HEK293 (cell line): ENCODE measurements at regions of chr10 and their contacts with region 1.

Region 1: DNA sequence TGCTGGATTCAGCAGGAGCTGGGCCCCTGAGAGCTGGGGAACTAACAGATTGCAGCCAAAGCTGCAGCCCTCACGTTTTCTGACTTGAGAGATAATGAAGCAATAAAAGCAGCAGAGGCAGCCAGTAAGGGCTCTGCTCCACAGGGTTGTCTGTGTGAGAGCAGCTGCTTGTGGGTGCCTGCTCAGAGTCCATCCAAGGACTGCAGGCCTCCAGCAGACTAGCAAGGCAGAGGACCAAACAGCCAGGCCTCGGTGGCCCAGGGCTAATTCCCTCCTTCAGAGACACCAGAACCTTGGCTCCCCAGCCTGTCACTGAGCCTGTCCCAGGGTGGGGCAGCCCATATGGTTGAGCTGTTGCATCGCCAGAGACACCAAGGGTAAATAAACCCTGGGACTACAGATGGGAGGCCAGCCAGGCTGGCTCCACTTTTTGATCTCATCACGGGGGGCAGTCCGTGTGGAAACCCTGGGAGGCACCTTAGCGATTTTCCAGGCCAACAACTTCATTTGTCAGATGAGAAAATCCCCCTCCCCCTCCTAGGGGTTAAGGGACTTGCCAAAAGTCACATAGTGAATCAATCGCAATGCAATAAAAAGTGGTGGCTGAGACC is 229.2 kb downstream of the WDR11 start:
- H3K4me3 ChIP-seq: no peak overlapping the region
- H3K27ac ChIP-seq: peak overlapping the region; percentile 4; the same call in 1 of the 2 replicates
- H3K4me1 ChIP-seq: peaks cover 8% of the 10 kb centered on the region; the same call in 1 of the 2 replicates
- CTCF ChIP-seq: no peak

Region 2: DNA sequence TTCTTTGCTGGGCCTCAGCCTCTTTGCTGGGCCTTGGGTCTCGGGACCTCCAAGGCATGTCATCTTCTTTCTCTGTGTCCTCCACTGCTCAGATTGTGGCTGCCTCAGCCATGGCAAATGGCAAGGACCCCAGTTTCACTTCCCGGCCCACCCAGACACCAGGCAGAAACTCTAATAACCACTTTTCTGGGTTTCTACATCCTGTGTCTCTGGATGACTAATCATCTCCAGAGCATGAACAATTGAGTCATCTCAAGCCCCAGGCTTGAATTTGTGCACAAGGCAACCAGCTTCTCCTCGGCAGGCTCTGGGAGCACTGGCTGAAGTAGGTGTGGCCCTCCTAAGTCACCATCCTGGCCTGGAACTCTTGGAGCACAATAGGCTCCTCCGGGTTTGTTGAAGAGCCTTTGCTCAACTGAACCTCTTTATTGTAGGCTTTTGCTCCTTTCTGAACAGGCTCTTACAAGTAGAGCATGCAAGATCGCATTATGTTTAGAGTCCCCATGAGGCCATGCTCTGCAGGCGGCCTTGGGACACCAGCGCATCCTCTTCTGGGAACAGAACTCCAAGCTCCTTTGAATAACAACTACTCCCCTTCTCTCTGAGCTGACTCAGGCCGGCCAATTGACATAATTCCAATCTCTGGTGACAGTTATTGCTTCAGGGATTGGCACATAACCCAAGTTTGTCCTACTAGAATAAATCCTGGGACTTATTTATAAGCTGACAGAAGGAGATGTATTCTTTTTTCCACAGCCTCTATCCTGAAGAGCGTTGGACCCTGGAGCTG is 11.1 kb before region 1 on chr10:
- CTCF ChIA-PET with region 1: interaction called, 10 read pairs
- POLR2A ChIA-PET with region 1: no interaction called
- H3K4me3 ChIP-seq: no peak overlapping the region
- H3K27ac ChIP-seq: no peak overlapping the region
- H3K4me1 ChIP-seq: 0 out of 2 replicates have a peak, but pooled peaks cover 2% of the 10 kb centered on the region
- CTCF ChIP-seq: no peak

Region 3: DNA sequence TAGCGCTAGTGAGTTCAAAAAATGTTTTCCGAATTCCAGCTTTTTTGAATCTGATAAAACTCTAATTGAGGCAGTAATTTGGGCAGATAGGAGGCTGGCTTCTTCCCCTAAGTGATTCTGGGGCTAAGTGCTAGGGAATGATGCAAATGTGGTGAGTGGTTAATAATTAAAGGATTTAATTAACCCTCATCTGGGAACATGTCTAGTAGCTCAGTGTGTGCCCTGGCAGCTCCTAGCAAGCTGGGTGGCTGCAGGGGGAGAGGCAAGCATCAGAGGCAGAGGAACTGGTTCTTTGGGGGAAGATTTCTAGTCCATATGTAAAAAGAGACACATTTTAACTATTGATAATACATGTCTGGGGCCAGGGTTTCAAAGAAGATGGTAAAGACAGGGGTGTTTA is 125.2 kb after region 1 on chr10:
- CTCF ChIA-PET with region 1: no interaction called
- POLR2A ChIA-PET with region 1: no interaction called
- H3K4me3 ChIP-seq: no peak overlapping the region
- H3K27ac ChIP-seq: no peak overlapping the region
- H3K4me1 ChIP-seq: no peaks in the 10 kb centered on the region; the same call in 1 of the 2 replicates
- CTCF ChIP-seq: no peak

Region 4: GRCh38 chr10:121426307-121426706 is 345.9 kb after region 1 on chr10:
- CTCF ChIA-PET with region 1: no interaction called
- POLR2A ChIA-PET with region 1: no interaction called
- H3K4me3 ChIP-seq: no peak overlapping the region
- H3K27ac ChIP-seq: no peak overlapping the region
- H3K4me1 ChIP-seq: peaks cover 5% of the 10 kb centered on the region
- CTCF ChIP-seq: no peak